ENCODE measurements at regions of chr14 and their contacts with region 1.

Region 1: GRCh38 chr14:70821584-70822529 is 12.5 kb upstream of the MAP3K9 start:
- DNase-seq: peak in 34 of 35 experiments; percentile 8 to 63 (median 34)
- ATAC-seq: peak; percentile 51 to 60 (median 56)
- H3K4me3 ChIP-seq: peak overlapping the region; percentile 59 to 69
- H3K4me3 Mint-ChIP-seq: peak overlapping the region; percentile 77 to 84 (median 80)
- H3K27ac ChIP-seq: no peak overlapping the region
- H3K27ac Mint-ChIP-seq: no peak overlapping the region
- H3K4me1 ChIP-seq: peaks cover 2 to 24% of the 10 kb centered on the region in 2 experiments
- H3K4me1 Mint-ChIP-seq: peaks cover 16 to 17% (median 16%) of the 10 kb centered on the region in 3 donors
- H3K27me3 ChIP-seq: peaks cover 2 to 23% of the 10 kb centered on the region in 2 experiments
- H3K27me3 Mint-ChIP-seq: peaks cover 18 to 19% of the 10 kb centered on the region in 2 donors

Region 2: DNA sequence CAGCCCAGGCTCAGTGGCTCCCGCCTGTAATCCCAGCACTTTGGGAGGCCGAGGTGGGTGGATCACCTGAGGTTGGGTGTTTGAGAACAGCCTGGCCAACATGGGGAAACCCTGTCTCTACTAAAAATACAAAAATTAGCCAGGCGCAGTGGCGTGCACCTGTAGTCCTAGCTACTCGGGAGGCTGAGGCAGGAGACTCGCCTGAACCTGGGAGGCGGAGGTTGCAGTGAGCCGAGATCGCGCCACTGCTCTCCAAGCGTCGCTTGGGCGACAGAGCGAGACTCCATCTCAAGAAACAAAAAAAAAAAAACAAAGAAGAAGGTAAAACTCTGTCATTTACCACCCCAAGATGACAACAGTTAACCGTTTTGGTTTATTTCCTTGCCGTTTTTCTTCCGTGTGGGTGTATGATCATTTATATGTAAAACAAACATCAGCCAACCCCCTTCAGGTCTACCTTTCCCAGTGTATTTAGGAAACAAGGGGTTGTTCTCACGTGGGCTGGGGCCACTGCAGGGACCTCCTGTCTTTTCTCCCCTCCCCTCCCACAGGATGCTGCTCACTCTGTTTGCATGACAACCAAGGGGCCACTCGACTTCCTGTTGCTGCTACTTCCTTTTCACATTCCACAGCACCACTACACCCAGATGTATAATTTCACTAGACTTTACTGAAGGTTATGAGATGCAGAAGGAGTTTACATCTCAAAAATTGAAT is 166.6 kb before region 1 on chr14:
- CTCF ChIA-PET with region 1: interaction called in 1 of 2 experiments, 12 read pairs
- POLR2A ChIA-PET with region 1: no interaction called
- DNase-seq: peak; percentile 50 to 87 (median 76)
- ATAC-seq: peak; percentile 88 to 95 (median 92)
- H3K4me3 ChIP-seq: peak overlapping the region; percentile 30 to 38
- H3K4me3 Mint-ChIP-seq: peak overlapping the region; percentile 72 to 78 (median 73)
- H3K27ac ChIP-seq: peak overlapping the region; percentile 83
- H3K27ac Mint-ChIP-seq: peak overlapping the region; percentile 95 to 98
- H3K4me1 ChIP-seq: peaks cover 76 to 79% of the 10 kb centered on the region in 2 experiments
- H3K4me1 Mint-ChIP-seq: peaks cover 92 to 94% (median 93%) of the 10 kb centered on the region in 3 donors
- H3K27me3 ChIP-seq: no peaks in the 10 kb centered on the region
- H3K27me3 Mint-ChIP-seq: no peaks in the 10 kb centered on the region

Region 3: DNA sequence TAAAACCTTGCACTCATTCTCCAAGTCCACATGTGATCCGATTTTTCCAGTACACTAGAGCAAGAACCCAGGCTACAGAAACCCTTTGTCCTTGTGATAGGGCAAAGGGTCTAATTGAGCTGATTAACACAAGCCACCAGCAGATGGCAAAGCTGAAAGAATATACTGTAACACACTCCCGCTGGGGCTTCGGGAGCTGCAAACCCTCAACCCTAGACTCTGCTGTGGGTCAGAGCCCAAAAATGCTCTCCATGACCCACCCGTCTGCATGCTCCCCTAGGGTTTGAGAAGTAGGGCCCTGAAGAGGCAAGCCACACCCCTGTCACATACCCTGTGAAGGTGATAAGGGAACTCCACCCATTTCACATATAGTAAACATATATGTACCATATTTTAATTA is 51.8 kb after region 1 on chr14:
- CTCF ChIA-PET with region 1: interaction called, 3 to 11 read pairs
- POLR2A ChIA-PET with region 1: interaction called in 1 of 2 experiments, 3 read pairs
- DNase-seq: peak in 6 of 35 experiments; percentile 10 to 44 (median 20)
- ATAC-seq: peak in 3 of 4 experiments; percentile 36 to 68 (median 59)
- H3K4me3 ChIP-seq: no peak overlapping the region
- H3K4me3 Mint-ChIP-seq: no peak overlapping the region
- H3K27ac ChIP-seq: no peak overlapping the region
- H3K27ac Mint-ChIP-seq: peak overlapping the region; percentile 49 to 78
- H3K4me1 ChIP-seq: peaks cover 0 to 16% of the 10 kb centered on the region in 2 experiments
- H3K4me1 Mint-ChIP-seq: peaks cover 17 to 25% (median 22%) of the 10 kb centered on the region in 3 donors
- H3K27me3 ChIP-seq: no peaks in the 10 kb centered on the region
- H3K27me3 Mint-ChIP-seq: no peaks in the 10 kb centered on the region

Region 4: GRCh38 chr14:70972107-70972976 is 150.5 kb after region 1 on chr14:
- CTCF ChIA-PET with region 1: interaction called, 7 to 16 read pairs
- POLR2A ChIA-PET with region 1: interaction called in 1 of 2 experiments, 3 read pairs
- DNase-seq: peak; percentile 57 to 93 (median 79)
- ATAC-seq: peak; percentile 76 to 84 (median 82)
- H3K4me3 ChIP-seq: no peak overlapping the region
- H3K4me3 Mint-ChIP-seq: no peak overlapping the region
- H3K27ac ChIP-seq: no peak overlapping the region
- H3K27ac Mint-ChIP-seq: peak overlapping the region; percentile 63 to 66
- H3K4me1 ChIP-seq: peaks cover 4 to 6% of the 10 kb centered on the region in 2 experiments
- H3K4me1 Mint-ChIP-seq: peaks cover 50 to 61% (median 58%) of the 10 kb centered on the region in 3 donors
- H3K27me3 ChIP-seq: no peaks in the 10 kb centered on the region
- H3K27me3 Mint-ChIP-seq: no peaks in the 10 kb centered on the region

Region 5: GRCh38 chr14:70999117-70999516 is 177.3 kb after region 1 on chr14:
- CTCF ChIA-PET with region 1: interaction called in 1 of 2 experiments, 12 read pairs
- POLR2A ChIA-PET with region 1: no interaction called
- DNase-seq: peak in 1 of 35 experiments; percentile 52
- ATAC-seq: peak; percentile 79 to 95 (median 92)
- H3K4me3 ChIP-seq: peak overlapping the region; percentile 10 to 20
- H3K4me3 Mint-ChIP-seq: peak overlapping the region; percentile 8 to 52 (median 47)
- H3K27ac ChIP-seq: peak overlapping the region; percentile 79
- H3K27ac Mint-ChIP-seq: peak overlapping the region; percentile 76 to 92
- H3K4me1 ChIP-seq: peaks cover 19 to 28% of the 10 kb centered on the region in 2 experiments
- H3K4me1 Mint-ChIP-seq: peaks cover 74 to 88% (median 84%) of the 10 kb centered on the region in 3 donors
- H3K27me3 ChIP-seq: no peaks in the 10 kb centered on the region
- H3K27me3 Mint-ChIP-seq: no peaks in the 10 kb centered on the region

Measured in T-cell (primary cell).